Head of caudate nucleus (tissue), 42 donors: ENCODE measurements at regions of chr1 and their contacts with region 1.

Region 1: GRCh38 chr1:111399792-111400610 is 27.5 kb downstream of the OVGP1 start:
- DNase-seq: peak in 36 of 42 donors; percentile 5 to 89 (median 63)

Region 2: DNA sequence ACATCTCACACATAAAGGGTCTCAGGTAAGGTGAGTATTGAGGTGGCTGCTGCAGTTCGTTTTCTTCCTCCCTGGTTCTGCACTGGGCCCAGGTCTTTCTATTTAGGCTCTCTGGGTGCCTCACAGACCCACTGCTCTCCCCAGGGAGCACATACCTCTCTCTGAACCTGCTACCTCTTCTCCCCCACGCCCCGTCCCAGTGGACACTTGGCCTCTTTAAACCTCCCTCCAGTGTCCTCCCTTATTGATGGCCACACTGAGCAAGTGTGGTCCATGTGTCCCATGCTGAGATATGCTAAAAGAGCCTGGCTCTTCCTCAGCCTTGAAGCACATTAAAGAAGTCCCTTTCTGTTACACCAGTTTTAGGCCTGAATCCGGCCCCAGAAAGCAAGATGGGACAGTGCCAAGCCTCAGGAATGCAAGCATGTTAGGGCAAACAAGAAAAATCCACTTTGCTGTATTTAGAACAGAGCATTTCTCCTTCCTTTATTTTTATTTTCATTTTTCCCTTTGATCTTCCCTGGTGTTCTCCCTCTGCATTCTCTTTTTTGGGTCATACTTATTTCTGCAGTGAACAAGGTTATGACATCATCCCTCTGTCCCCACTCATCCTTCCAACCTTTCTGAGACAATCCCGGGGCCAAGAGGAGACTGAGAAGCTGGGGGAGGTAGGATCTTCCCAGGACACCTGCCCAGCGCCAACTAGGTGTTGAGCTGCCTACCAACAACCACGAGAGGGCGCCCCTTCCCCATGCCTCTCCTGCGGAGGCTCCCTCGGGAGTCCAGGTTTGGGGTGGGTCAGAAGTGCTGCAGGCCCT is 177.5 kb before region 1 on chr1:
- intact Hi-C with region 1: loop called (anchors 5 kb)
- DNase-seq: peak; percentile 53 to 90 (median 80)